Tibial artery (tissue), 4 donors: ENCODE measurements at regions of chr3 and their contacts with region 1.

Region 1: GRCh38 chr3:50436114-50436674 is 67.2 kb downstream of the CACNA2D2 start:
- DNase-seq: peak in 1 of 2 donors; percentile 41
- H3K4me3 ChIP-seq: no peak overlapping the region
- H3K27ac ChIP-seq: no peak overlapping the region
- H3K4me1 ChIP-seq: no peaks in the 10 kb centered on the region
- H3K27me3 ChIP-seq: peaks cover 0 to 16% of the 10 kb centered on the region in 2 donors
- CTCF ChIP-seq: peak; percentile 56 to 61

Region 2: DNA sequence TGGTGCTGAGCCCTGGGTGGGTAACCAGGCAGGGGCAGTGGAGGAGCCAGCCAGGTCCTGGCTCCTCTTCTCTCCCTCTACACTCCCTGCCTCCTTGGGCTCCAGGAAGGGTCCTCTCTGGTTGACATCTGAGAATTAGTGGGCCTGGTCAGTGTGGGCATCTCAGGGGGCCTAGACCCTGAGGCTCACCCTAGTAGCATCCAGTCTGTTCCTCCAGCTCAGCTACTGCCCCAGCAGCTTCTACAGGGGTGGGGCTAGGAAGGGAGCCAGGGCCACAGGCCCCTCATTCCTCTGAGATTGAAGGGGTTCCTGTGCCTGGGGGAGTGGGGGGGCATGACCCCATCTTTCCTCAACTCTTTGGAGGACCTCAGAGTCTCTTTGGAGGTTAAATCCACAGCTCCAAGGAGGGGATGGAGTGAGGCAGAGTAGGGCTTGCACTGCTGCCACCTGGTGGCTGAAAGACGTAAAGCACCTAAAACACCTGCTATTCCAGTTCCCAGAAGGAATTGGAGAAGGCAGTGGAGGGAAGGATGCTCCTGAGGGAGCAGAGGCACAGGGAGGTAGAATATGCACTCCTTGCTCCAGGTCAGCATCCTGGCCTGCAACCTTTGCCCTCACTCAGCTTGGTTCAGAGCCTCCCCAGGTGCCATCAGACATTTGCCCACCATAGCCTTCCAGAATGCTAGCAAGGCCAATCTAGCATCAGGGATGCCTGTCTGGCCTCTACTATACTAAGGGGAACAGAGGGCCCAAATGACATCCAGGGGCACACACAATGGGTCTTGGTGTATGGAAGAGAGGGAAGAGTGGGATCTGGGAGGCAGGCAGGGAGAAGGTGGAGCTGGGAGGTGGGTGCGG is 106.2 kb after region 1 on chr3:
- intact Hi-C with region 1: loop called (anchors 2 kb)
- DNase-seq: peak; percentile 68 to 80
- H3K4me3 ChIP-seq: no peak overlapping the region
- H3K27ac ChIP-seq: no peak overlapping the region
- H3K4me1 ChIP-seq: no peaks in the 10 kb centered on the region
- H3K27me3 ChIP-seq: peaks cover 0 to 5% of the 10 kb centered on the region in 2 donors
- CTCF ChIP-seq: peak; percentile 86 to 89